PC-9 (cell line): ENCODE measurements at regions of chr13 and their contacts with region 1.

Region 1: GRCh38 chr13:101452519-101453485 is at the start of gene ITGBL1:
- DNase-seq: peak; percentile 23 to 56
- H3K4me3 ChIP-seq: peak within 1 kb of the TSS; percentile 86
- H3K27ac ChIP-seq: peak within 1 kb of the TSS; percentile 98
- H3K4me1 ChIP-seq: peaks cover 78% of the 10 kb centered on the region
- H3K27me3 ChIP-seq: no peaks in the 10 kb centered on the region
- CTCF ChIP-seq: no peak
- total RNA-seq, gene ITGBL1: 52.5 and 62.8 TPM in 2 replicates

Region 2: GRCh38 chr13:101144808-101145419 is 307.9 kb before region 1 on chr13:
- CTCF ChIA-PET with region 1: no interaction called
- POLR2A ChIA-PET with region 1: no interaction called
- intact Hi-C with region 1: loop called (anchors 2 kb)
- DNase-seq: peak; percentile 7 to 57
- H3K4me3 ChIP-seq: no peak overlapping the region
- H3K27ac ChIP-seq: no peak overlapping the region
- H3K4me1 ChIP-seq: peaks cover 15% of the 10 kb centered on the region
- H3K27me3 ChIP-seq: no peaks in the 10 kb centered on the region
- CTCF ChIP-seq: peak; percentile 87

Region 3: GRCh38 chr13:101258071-101258470 is 194.7 kb before region 1 on chr13:
- CTCF ChIA-PET with region 1: no interaction called
- POLR2A ChIA-PET with region 1: interaction called, 5 read pairs
- intact Hi-C with region 1: loop called (anchors 1 kb)
- DNase-seq: peak; percentile 79 to 98
- H3K4me3 ChIP-seq: peak overlapping the region; percentile 60
- H3K27ac ChIP-seq: peak overlapping the region; percentile 95
- H3K4me1 ChIP-seq: peaks cover 18% of the 10 kb centered on the region
- H3K27me3 ChIP-seq: no peaks in the 10 kb centered on the region
- CTCF ChIP-seq: peak; percentile 49; the same call in 1 of the 2 replicates

Region 4: DNA sequence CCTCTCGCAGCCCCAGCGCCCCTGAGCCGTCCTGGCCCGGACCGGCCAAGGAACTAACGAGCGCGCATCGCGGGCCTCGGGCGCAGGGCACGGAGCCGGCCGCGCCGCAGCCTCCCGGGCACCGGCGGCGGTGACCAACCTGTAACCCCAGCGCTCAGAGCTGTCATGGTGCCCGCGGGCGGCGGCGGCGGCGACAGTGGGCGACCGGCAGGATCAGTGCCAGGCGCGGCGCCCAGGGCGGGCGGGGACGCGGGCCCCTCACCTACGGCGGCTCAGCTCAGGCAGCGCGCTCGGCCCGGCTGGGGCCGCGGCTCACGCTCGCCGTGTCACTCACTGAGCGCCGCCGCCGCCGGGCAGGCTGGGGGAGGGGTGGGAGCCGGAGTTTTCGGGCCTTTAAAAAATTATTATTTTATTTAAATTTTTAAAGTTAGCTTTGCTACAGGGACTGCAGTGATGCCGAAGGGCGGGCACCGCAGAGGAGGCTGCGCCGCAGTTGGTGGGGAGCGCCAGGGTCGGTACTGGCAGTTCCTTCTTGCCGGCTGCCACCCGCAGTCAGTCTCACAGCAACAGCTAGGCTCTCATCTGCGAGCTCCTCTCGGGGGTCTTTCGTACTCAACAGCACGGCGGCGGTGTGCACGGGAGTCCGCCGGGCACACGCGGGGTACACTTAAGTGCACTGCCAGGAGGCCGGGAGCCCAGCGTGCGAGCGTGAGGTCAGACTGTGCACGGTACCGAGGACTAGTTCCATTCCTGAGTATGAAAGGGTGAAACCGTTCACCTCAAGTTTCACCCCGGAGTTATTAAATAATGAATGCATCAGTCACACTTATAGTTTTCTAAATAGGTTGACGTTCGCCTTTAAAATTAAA is 36.4 kb before region 1 on chr13 and contains the start of gene NALCN:
- CTCF ChIA-PET with region 1: no interaction called
- POLR2A ChIA-PET with region 1: interaction called, 4 read pairs
- intact Hi-C with region 1: loop called (anchors 2 kb)
- DNase-seq: peak; percentile 51 to 55
- H3K4me3 ChIP-seq: peak within 1 kb of the TSS; percentile 88
- H3K27ac ChIP-seq: peak within 1 kb of the TSS; percentile 89
- H3K4me1 ChIP-seq: peaks cover 33% of the 10 kb centered on the region
- H3K27me3 ChIP-seq: no peaks in the 10 kb centered on the region
- CTCF ChIP-seq: no peak
- total RNA-seq, gene NALCN: 7.7 and 8.8 TPM in 2 replicates

Region 5: DNA sequence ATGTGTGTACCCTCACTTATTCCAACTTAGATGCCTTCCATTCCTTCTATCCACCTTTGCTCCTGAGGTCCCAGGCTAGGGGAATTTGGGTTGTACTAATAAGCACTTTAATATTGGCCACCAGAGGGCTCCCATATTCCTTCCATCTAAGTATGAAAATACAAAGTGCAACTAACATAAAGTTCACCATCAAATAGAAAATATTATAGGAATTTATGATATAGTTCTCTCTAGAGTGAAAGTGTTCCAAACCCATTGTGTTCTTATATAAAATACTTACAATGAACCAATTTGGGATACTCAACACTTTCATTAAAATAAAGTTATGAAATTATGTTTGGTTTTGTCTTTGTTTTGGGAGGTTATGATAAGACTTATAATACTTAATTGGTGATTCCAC is 62.0 kb after region 1 on chr13:
- CTCF ChIA-PET with region 1: no interaction called
- POLR2A ChIA-PET with region 1: interaction called, 6 read pairs
- intact Hi-C with region 1: loop called (anchors 1 kb)
- DNase-seq: peak; percentile 29 to 64
- H3K4me3 ChIP-seq: no peak overlapping the region
- H3K27ac ChIP-seq: no peak overlapping the region
- H3K4me1 ChIP-seq: no peaks in the 10 kb centered on the region; the same call in 1 of the 2 replicates
- H3K27me3 ChIP-seq: no peaks in the 10 kb centered on the region
- CTCF ChIP-seq: peak; percentile 92

Region 6: GRCh38 chr13:101626925-101627555 is 174.2 kb after region 1 on chr13:
- CTCF ChIA-PET with region 1: no interaction called
- POLR2A ChIA-PET with region 1: no interaction called
- intact Hi-C with region 1: loop called (anchors 2 kb)
- DNase-seq: no peak
- H3K4me3 ChIP-seq: no peak overlapping the region
- H3K27ac ChIP-seq: no peak overlapping the region
- H3K4me1 ChIP-seq: peaks cover 50% of the 10 kb centered on the region
- H3K27me3 ChIP-seq: no peaks in the 10 kb centered on the region
- CTCF ChIP-seq: no peak

Region 7: GRCh38 chr13:101751488-101751887 is 298.7 kb after region 1 on chr13:
- CTCF ChIA-PET with region 1: no interaction called
- POLR2A ChIA-PET with region 1: no interaction called
- intact Hi-C with region 1: loop called (anchors 1 kb)
- DNase-seq: peak; percentile 38 to 89
- H3K4me3 ChIP-seq: no peak overlapping the region
- H3K27ac ChIP-seq: no peak overlapping the region
- H3K4me1 ChIP-seq: peaks cover 16% of the 10 kb centered on the region
- H3K27me3 ChIP-seq: no peaks in the 10 kb centered on the region
- CTCF ChIP-seq: no peak